Activated naive CD4-positive, alpha-beta T cell treated with anti-CD3 and anti-CD28 coated beads for 36 hours (primary cell): ENCODE measurements at regions of chr7 and their contacts with region 1.

Region 1: GRCh38 chr7:5694912-5695726 is 86.3 kb downstream of the RNF216 start:
- DNase-seq: peak; percentile 93
- H3K4me3 Mint-ChIP-seq: peak overlapping the region; percentile 88
- H3K27ac Mint-ChIP-seq: peak overlapping the region; percentile 96
- H3K4me1 Mint-ChIP-seq: peaks cover 97% of the 10 kb centered on the region
- H3K27me3 Mint-ChIP-seq: no peaks in the 10 kb centered on the region

Region 2: DNA sequence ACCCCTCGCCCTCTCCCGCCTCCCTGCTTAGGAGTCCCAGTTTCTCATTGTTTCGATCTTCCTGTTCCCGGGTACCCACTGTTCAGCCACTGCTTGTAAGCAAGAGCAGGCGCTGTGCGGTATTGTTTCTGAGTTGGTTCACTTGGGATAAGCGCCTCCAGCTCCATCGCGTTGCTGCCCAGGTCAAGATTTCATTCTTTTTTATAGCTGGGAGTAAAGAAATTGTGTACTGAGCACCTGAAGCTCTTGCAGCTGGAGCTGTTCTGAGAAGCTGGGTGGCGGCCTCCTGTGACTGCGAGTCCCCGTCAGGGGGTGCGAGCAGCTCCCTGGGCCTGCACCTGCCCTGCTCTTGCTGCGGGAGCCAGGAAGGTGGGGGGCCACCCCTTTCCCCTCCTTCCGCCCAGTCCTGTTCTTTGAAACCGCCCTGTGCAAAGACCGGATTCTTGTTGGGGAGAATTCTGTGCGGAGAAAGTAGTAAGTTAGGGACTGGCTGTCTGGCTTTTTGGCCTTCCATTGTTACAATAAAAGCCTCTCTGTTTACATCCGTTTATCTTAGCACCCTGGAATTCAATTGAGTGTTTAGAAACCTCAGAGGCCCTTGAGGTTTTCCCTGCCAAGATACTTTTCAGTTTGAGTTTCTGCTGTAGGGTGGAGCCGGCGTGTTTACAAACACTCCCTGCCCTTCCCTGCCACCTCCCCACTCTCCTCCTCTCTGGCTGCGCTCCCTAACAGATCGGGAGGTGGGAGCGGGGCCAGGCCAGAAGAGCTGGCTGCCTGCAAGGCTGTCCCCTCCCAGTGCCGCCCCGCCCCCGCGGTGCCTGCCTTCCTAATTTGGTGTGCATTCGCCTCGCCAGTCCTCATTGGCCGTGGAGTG is 950.5 kb before region 1 on chr7:
- CTCF ChIA-PET with region 1: no interaction called
- intact Hi-C with region 1: loop called (anchors 10 kb)
- DNase-seq: peak; percentile 77
- H3K4me3 Mint-ChIP-seq: peak overlapping the region; percentile 80
- H3K27ac Mint-ChIP-seq: peak overlapping the region; percentile 95
- H3K4me1 Mint-ChIP-seq: peaks cover 73% of the 10 kb centered on the region
- H3K27me3 Mint-ChIP-seq: no peaks in the 10 kb centered on the region

Region 3: DNA sequence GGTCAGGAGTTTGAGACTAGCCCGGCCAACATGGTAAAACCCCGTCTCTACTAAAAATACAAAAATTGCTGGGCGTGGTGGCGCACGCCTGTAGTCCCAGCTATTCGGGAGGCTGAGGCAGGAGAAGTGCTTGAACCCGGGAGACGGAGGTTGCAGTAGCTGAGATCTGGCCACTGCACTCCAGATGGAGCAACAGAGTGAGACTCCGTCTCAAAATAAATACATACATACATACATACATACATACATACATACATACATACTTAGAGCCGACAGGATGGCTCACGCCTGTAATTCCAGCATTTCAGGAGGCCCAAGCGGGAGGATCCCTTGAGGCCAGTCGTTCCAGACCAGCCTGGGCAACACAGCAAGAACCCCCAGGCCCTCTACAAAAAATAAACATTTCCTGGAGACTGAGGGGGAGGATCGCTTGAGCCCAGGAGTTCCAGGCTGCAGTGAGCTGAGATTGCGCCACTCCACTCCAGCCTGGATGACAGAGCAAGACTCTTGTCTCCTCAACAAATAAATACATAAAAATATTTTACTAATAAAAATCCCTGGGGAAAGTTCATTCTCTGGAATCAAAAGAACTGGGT is 180.6 kb before region 1 on chr7:
- CTCF ChIA-PET with region 1: no interaction called
- intact Hi-C with region 1: no loop called
- DNase-seq: no peak
- H3K4me3 Mint-ChIP-seq: peak overlapping the region; percentile 94
- H3K27ac Mint-ChIP-seq: peak overlapping the region; percentile 93
- H3K4me1 Mint-ChIP-seq: peaks cover 10% of the 10 kb centered on the region
- H3K27me3 Mint-ChIP-seq: no peaks in the 10 kb centered on the region

Region 4: GRCh38 chr7:5596046-5596895 is 98.8 kb before region 1 on chr7:
- CTCF ChIA-PET with region 1: no interaction called
- intact Hi-C with region 1: no loop called
- DNase-seq: peak; percentile 93
- H3K4me3 Mint-ChIP-seq: peak overlapping the region; percentile 67
- H3K27ac Mint-ChIP-seq: peak overlapping the region; percentile 72
- H3K4me1 Mint-ChIP-seq: peaks cover 22% of the 10 kb centered on the region
- H3K27me3 Mint-ChIP-seq: peaks cover 20% of the 10 kb centered on the region

Region 5: GRCh38 chr7:5629941-5630340 is 65.2 kb before region 1 on chr7:
- CTCF ChIA-PET with region 1: no interaction called
- intact Hi-C with region 1: loop called (anchors 2 kb)
- DNase-seq: peak; percentile 70
- H3K4me3 Mint-ChIP-seq: no peak overlapping the region
- H3K27ac Mint-ChIP-seq: peak overlapping the region; percentile 38
- H3K4me1 Mint-ChIP-seq: peaks cover 33% of the 10 kb centered on the region
- H3K27me3 Mint-ChIP-seq: no peaks in the 10 kb centered on the region

Region 6: GRCh38 chr7:5665094-5666025 is 29.8 kb before region 1 on chr7:
- CTCF ChIA-PET with region 1: interaction called, 26 read pairs
- intact Hi-C with region 1: no loop called
- DNase-seq: peak; percentile 82
- H3K4me3 Mint-ChIP-seq: no peak overlapping the region
- H3K27ac Mint-ChIP-seq: no peak overlapping the region
- H3K4me1 Mint-ChIP-seq: peaks cover 11% of the 10 kb centered on the region
- H3K27me3 Mint-ChIP-seq: no peaks in the 10 kb centered on the region

Region 7: DNA sequence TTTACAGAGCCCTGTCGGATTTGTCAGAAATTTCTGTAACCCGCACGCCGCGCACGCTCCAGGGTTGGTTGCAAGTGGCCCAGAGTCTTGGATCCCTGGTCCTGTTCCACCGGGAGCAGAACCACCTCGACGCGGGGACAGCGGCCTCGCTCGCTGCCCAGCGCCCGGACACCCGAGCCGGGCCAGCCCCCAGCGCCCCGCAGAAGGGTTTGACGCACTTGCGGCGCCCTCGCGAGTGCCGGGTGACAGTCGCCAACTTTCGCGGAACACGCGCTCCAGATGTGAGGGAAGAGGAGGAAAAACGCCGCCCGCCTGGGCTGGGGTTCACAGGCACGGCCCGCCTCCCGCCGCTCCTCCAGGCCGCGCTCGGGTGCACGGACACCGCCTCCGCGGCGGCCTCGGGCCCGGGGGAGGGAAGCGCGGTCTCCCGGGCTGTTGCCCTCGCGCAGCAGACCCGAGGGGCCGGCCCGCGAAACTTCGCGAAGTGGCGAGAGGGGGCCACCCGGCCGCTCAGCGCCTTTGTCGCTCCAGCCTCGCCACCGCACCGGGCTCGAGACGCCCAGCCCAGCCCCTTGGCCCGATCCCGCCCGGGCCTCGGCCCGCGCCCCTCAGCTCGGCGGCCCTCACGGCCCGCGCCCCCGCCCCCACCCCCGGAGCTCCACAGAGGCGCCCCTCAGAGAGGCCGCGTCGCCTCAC is 85.8 kb after region 1 on chr7:
- CTCF ChIA-PET with region 1: interaction called, 3 read pairs
- intact Hi-C with region 1: loop called (anchors 2 kb)
- DNase-seq: peak; percentile 57
- H3K4me3 Mint-ChIP-seq: peak overlapping the region; percentile 84
- H3K27ac Mint-ChIP-seq: peak overlapping the region; percentile 78
- H3K4me1 Mint-ChIP-seq: peaks cover 42% of the 10 kb centered on the region
- H3K27me3 Mint-ChIP-seq: no peaks in the 10 kb centered on the region

Region 8: GRCh38 chr7:6447581-6448199 is 752.6 kb after region 1 on chr7 and contains the start of gene DAGLB:
- CTCF ChIA-PET with region 1: no interaction called
- intact Hi-C with region 1: loop called (anchors 5 kb)
- DNase-seq: peak; percentile 96
- H3K4me3 Mint-ChIP-seq: peak within 1 kb of the TSS; percentile 91
- H3K27ac Mint-ChIP-seq: peak within 1 kb of the TSS; percentile 89
- H3K4me1 Mint-ChIP-seq: peaks cover 37% of the 10 kb centered on the region
- H3K27me3 Mint-ChIP-seq: no peaks in the 10 kb centered on the region
- total RNA-seq, gene DAGLB: 13.1 to 13.6 TPM